CD4-positive, alpha-beta T cell (primary cell): ENCODE measurements at regions of chr3 and their contacts with region 1.

Region 1: DNA sequence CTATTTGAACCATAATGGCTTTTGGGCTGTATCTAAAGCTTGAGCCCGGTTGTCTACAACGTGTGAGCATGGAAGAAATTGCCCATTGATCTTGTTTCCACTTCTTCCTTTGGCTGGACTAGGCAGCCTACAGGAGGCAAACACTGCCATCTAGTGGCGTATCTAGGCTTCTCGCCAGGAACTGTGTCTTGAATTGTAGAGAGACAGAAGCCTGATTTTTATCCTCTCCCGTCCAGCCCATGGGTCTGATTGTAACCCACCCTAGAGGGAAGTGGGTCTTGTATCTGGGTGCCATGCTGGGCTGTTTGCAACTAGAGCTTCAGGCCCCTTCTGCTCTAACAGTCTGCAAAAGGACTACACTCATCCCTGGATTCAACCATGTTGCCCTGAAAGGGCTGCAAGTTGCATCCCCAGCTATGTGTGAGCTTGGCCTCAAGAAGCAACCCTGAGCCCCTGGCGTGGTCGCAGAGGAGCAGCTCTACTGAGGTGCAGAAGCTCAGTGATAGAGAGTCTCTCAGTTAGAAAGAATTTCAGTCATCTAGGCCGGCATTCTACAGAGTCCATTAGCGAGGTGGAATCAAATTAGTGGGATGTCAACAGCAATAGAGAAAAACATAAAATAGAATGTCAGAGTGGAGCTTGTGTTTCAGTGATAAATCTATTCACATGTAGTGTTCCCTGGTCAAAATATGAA is 170.2 kb upstream of the UMPS start:
- DNase-seq: peak; percentile 19 to 71 (median 40)
- ATAC-seq: peak; percentile 57
- H3K4me3 ChIP-seq: no peak overlapping the region
- H3K4me3 Mint-ChIP-seq: no peak overlapping the region
- H3K27ac ChIP-seq: no peak overlapping the region
- H3K27ac Mint-ChIP-seq: no peak overlapping the region
- H3K4me1 ChIP-seq: peaks cover 4% of the 10 kb centered on the region
- H3K4me1 Mint-ChIP-seq: no peaks in the 10 kb centered on the region
- H3K27me3 ChIP-seq: peaks cover 9 to 17% of the 10 kb centered on the region in 2 experiments
- H3K27me3 Mint-ChIP-seq: peaks cover 49% of the 10 kb centered on the region
- CTCF ChIP-seq: peak; percentile 91

Region 2: DNA sequence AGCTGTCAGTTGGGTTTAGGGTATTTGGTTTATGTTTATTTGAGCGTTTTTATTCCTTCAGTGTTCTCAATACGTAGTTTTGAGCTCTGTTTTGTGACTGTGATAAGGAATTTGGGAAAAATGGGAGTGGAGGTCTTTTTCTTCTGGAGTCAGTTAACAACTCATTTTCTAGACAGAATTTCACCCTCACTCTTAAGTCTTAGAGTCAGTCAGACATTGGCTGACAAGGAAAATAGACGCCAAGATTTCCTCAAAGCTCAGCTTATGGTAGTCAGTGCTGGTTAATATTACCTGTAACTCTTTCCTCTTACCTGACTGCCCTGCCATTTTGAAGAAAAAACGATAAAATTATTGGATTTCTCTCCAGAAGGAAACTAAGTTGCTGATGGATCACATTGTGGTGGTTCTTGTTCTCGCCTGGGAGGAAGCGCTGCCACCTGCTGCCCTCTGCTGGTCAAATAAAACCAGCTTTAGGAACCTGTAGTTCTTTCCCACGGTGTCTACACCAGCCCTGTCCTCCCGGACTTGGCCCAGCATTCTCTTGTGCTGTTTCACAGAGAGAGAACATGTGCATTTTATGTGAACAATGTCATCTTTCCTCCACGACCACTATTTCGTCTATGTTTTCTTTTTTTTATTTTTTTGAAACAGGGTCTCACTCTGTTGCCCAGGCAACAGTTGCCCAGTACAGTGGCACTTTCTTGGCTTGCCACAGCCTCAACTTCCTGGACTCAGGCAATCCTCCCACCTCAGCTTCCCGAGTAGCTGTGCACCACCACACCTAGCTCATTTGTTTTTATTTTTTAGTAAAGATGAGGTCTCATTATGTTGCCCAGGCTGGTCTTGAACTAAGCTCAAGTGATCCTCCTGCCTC is 128.8 kb after region 1 on chr3:
- CTCF ChIA-PET with region 1: interaction called, 5 read pairs
- POLR2A ChIA-PET with region 1: no interaction called
- intact Hi-C with region 1: loop called (anchors 1 kb)
- DNase-seq: peak; percentile 38 to 82 (median 59)
- ATAC-seq: peak; percentile 83
- H3K4me3 ChIP-seq: no peak overlapping the region
- H3K4me3 Mint-ChIP-seq: no peak overlapping the region
- H3K27ac ChIP-seq: no peak overlapping the region
- H3K27ac Mint-ChIP-seq: no peak overlapping the region
- H3K4me1 ChIP-seq: peaks cover 6% of the 10 kb centered on the region
- H3K4me1 Mint-ChIP-seq: peaks cover 6% of the 10 kb centered on the region
- H3K27me3 ChIP-seq: no peaks in the 10 kb centered on the region
- H3K27me3 Mint-ChIP-seq: peaks cover 26% of the 10 kb centered on the region
- CTCF ChIP-seq: peak; percentile 92

Region 3: GRCh38 chr3:124905849-124906248 is 345.8 kb after region 1 on chr3:
- CTCF ChIA-PET with region 1: no interaction called
- POLR2A ChIA-PET with region 1: no interaction called
- intact Hi-C with region 1: loop called in 1 of 2 experiments (anchors 10 kb)
- DNase-seq: no peak
- ATAC-seq: no peak
- H3K4me3 ChIP-seq: no peak overlapping the region
- H3K4me3 Mint-ChIP-seq: no peak overlapping the region
- H3K27ac ChIP-seq: no peak overlapping the region
- H3K27ac Mint-ChIP-seq: no peak overlapping the region
- H3K4me1 ChIP-seq: peaks cover 8% of the 10 kb centered on the region
- H3K4me1 Mint-ChIP-seq: peaks cover 2% of the 10 kb centered on the region
- H3K27me3 ChIP-seq: peaks cover 0 to 8% of the 10 kb centered on the region in 2 experiments
- H3K27me3 Mint-ChIP-seq: peaks cover 13% of the 10 kb centered on the region
- CTCF ChIP-seq: no peak